ENCODE measurements at regions of chr2 and their contacts with region 1.

Region 1: DNA sequence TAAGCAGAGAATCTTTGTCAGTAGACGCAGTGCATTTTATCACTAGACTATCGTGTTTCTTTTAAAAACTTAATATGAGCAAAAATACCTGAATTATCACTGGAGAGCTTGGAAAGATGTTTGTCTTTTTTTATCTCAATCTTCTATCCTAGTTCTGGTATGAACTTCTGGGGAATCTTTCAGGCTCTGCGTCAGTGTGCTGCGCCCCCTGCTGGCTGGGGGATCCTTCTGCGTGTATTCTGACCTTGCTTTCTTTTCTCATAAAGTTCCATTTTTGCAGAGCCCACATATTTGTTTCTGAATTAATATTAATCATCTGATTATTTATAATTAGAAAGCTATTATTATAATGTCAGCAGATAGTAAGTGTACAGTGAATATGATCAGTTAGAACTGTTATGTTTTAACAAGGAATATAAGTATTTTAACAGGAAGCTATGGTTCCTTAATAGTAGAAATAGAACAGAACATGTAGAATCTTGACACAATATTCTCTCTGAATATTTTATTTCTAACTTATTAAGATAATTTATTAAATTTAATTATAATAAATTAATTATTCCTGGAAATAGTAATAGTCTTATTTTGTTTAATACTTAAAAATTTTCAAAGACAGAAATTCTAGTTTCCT is 945.0 kb upstream of the CRIM1 start:
- DNase-seq: no peak
- H3K4me3 ChIP-seq: no peak overlapping the region
- H3K27ac ChIP-seq: no peak overlapping the region
- H3K4me1 ChIP-seq: no peaks in the 10 kb centered on the region
- H3K27me3 ChIP-seq: no peaks in the 10 kb centered on the region
- CTCF ChIP-seq: peak; percentile 47 to 81 (median 73)

Region 2: DNA sequence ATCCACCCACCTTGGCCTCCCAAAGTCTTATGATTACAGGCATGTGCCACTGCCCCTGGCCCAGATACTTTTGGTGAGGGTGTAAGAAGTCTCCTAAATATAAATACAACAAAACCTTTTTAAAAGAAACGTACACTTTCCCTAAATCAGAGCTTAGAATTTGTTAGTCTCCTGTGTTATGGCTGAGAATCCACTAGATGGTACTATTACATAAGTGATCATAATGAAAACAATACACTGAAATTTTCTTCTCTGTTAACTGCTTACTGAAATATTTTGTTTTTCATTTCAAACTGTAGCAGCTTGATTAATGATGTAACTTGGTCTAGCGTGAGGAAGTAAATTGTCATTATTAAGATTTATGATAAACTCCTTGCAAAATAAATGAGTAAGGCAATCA is 1736.6 kb before region 1 on chr2:
- intact Hi-C with region 1: loop called (anchors 10 kb)
- DNase-seq: no peak
- H3K4me3 ChIP-seq: no peak overlapping the region
- H3K27ac ChIP-seq: no peak overlapping the region
- H3K4me1 ChIP-seq: no peaks in the 10 kb centered on the region
- H3K27me3 ChIP-seq: no peaks in the 10 kb centered on the region
- CTCF ChIP-seq: peak; percentile 10 to 50 (median 35)